ENCODE measurements at regions of chr4 and their contacts with region 1.

Region 1: DNA sequence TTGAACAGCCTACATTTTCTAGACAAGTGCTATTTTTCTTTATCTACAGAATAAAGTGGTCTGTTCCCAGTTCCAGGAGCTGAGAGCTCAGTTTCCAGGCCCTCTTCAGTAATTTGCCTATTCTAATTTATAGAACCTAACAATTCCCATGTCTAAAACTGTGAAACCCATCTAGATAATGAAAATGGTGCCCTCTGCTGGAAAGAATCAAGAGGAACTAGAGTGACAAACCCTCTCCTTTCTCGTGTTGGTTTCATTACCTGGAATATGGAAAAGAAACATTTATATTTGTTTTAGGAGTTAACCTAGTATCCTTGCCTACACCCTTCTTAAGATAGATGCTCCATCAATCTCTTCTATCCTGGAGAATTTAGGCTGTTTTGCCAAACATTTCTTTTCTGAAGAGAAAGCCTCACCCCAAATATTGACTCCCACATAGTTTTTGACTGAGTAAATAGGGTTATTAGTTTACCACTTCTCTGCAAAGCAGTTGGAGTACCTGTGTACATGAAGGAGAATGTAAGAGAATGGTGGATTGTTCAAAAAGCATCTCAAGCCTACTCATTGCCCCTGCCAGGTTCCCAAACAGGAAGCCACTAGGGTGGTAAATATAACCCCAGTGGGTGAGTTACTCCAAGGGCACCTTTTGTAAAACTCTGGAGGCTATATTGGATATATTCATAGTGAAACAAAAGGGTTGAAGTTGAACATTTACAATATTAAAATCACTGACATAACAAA is 121.6 kb downstream of the RASL11B start:
- DNase-seq: no peak
- H3K4me3 ChIP-seq: no peak overlapping the region
- H3K27ac ChIP-seq: no peak overlapping the region
- H3K4me1 ChIP-seq: peaks cover 0 to 11% (median 0%) of the 10 kb centered on the region in 4 donors
- H3K27me3 ChIP-seq: no peaks in the 10 kb centered on the region
- CTCF ChIP-seq: peak; percentile 67 to 77 (median 69)
- EP300 ChIP-seq: no peak
- POLR2A ChIP-seq: no peak

Region 2: GRCh38 chr4:52234561-52235440 is 748.9 kb before region 1 on chr4:
- in situ Hi-C with region 1: loop called in 1 of 4 experiments (anchors 25 kb)
- intact Hi-C with region 1: no loop called
- DNase-seq: no peak
- H3K4me3 ChIP-seq: no peak overlapping the region
- H3K27ac ChIP-seq: no peak overlapping the region
- H3K4me1 ChIP-seq: no peaks in the 10 kb centered on the region
- H3K27me3 ChIP-seq: no peaks in the 10 kb centered on the region
- CTCF ChIP-seq: peak in 3 of 5 experiments; percentile 13 to 22 (median 21)
- EP300 ChIP-seq: no peak
- POLR2A ChIP-seq: no peak

Region 3: GRCh38 chr4:52376132-52376704 is 607.5 kb before region 1 on chr4:
- in situ Hi-C with region 1: loop called (anchors 5 to 10 kb)
- intact Hi-C with region 1: no loop called
- DNase-seq: no peak
- H3K4me3 ChIP-seq: no peak overlapping the region
- H3K27ac ChIP-seq: no peak overlapping the region
- H3K4me1 ChIP-seq: no peaks in the 10 kb centered on the region
- H3K27me3 ChIP-seq: no peaks in the 10 kb centered on the region
- CTCF ChIP-seq: peak; percentile 57 to 73 (median 62)
- EP300 ChIP-seq: no peak
- POLR2A ChIP-seq: no peak

Region 4: GRCh38 chr4:52545099-52546069 is 438.3 kb before region 1 on chr4:
- in situ Hi-C with region 1: loop called (anchors 5 to 10 kb)
- intact Hi-C with region 1: loop called (anchors 5 kb)
- DNase-seq: peak; percentile 79
- H3K4me3 ChIP-seq: no peak overlapping the region
- H3K27ac ChIP-seq: no peak overlapping the region
- H3K4me1 ChIP-seq: no peaks in the 10 kb centered on the region
- H3K27me3 ChIP-seq: no peaks in the 10 kb centered on the region
- CTCF ChIP-seq: peak; percentile 86 to 93 (median 89)
- EP300 ChIP-seq: no peak
- POLR2A ChIP-seq: no peak

Measured in transverse colon (tissue), 4 donors.